Posterior cingulate gyrus (tissue), 11 donors: ENCODE measurements at regions of chr6 and their contacts with region 1.

Region 1: GRCh38 chr6:85923013-85923430 is 280.3 kb upstream of the SYNCRIP start:
- DNase-seq: peak in 5 of 10 donors; percentile 9 to 78 (median 14)

Region 2: DNA sequence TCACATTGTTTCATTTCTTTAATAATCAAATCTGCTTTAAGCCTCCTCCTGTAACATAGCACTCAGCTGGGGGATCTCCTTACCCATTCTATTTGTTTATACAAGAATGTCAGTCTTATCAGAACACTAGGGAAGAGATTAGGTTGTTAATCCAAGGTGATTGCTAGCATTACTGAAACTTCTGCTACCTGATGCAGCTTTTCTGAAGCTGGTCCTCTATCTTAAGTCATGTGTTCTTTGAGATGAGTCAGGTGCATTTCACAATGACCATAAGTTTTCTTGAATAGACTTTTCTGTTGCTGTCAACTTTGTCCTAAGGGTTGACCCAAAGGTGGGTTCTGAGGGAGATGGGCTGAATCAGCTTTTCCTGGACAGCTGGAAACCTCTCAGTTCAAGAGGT is 219.6 kb before region 1 on chr6:
- intact Hi-C with region 1: no loop called
- DNase-seq: no peak

Region 3: DNA sequence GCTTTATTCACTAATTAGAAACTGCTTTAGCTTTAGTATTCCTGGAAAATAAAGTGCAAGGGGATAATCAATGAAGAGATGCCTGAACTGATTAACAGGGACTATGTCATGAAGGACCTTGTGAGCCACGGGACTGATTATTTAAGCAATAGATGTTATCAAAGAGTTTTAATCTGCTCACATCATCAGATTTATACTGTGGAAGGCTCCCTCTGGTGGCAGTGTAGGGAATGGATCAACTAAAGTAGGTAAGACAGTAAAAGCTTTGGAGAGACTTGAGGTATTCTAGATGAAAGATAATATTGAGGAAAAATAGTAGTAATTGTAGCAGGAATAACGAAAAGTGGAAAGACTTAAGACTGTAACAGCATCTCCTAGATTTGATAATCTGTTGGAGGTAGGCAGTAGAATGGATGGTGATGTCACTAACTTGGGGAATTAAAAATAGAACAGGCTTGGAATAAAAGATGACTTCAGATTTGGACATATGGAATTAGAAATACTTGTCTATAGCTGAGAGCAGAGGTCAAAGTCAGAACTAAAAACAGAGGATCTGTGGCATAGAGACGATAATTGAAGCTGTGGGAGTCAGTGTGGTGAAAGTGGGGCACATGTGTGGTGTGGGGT is 934.0 kb after region 1 on chr6:
- intact Hi-C with region 1: loop called (anchors 2 kb)
- DNase-seq: peak in 3 of 10 donors; percentile 16 to 30 (median 20)

Region 4: DNA sequence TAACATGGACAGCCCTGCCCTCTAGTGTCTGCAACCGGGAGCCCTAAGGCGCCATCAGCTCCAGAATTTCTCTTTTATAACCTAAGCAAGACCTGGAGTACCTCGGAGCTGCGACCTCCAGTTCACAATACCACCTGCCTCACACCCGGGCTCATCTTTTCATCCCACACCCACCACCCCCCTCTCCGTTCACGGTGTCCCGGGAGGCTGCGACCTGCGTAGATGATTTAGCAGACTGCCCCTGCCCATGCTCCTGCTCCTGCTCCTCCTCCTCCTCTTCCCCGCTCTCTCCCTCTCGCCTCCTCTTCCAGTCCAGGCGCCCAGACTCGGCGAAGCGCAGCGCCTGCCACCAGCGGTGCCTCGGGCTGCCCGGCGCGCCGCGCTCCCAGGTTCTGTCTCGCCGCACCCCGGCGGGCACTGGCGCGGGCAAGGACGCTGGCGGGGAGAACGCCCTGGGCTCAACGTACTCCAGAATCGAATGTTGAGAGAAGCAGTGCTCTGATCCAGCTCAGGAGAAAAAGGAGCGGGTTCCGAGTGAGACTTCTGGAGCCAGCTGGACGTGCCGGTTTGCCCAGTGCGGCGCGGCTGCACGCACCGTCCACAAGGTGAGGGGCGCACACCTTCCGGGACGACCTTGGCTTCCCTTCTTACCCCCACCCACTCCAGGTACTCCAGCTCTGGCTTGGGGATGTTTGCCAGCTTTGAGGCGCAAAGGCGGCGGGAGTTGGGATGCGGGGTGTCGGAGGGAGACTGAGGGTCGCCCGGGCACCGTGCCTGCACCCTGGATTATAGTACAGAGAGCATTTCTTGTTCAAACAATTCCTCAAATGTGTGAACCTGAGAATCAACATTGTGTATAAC is 1014.4 kb after region 1 on chr6 and contains the start of gene HTR1E:
- intact Hi-C with region 1: loop called (anchors 2 kb)
- DNase-seq: peak; percentile 17 to 94 (median 62)

Region 5: DNA sequence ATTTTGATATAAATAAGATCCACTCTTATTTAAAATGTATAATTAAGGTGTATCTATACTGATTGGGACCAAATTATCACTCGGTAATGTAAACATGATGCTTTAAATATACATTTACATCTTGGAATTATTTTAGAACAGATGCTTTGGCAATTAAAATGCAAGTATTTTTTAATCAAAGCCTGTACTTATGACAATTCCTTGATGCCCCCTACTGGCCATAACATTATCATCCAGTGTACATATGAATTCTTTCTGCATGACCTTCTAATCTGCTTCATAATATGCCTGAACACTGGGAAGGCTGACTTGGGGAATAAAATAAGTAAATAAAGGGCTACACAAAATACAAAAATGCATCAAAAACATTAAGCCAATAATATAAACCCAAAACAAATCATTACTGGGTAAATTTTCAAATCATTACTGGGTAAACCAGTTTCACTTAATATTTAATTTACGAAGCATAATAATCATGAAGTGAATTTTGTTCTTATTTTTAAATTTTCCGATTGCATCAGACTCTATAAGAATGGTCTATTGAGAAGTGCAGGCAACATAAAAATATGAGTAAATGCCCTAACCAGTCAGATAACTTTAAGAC is 1106.8 kb after region 1 on chr6:
- intact Hi-C with region 1: loop called (anchors 10 kb)
- DNase-seq: no peak